Endothelial cell of umbilical vein (primary cell): ENCODE measurements at regions of chr14 and their contacts with region 1.

Region 1: GRCh38 chr14:88551094-88551870 is 3.5 kb downstream of the PTPN21 start:
- DNase-seq: peak; percentile 80
- H3K4me3 ChIP-seq: peak overlapping the region; percentile 77 to 100 (median 79)
- H3K27ac ChIP-seq: peak overlapping the region; percentile 30
- H3K4me1 ChIP-seq: peaks cover 34% of the 10 kb centered on the region
- H3K27me3 ChIP-seq: no peaks in the 10 kb centered on the region
- CTCF ChIP-seq: peak; percentile 9 to 22
- POLR2A ChIP-seq: peak; percentile 51

Region 2: GRCh38 chr14:88385345-88386101 is 165.8 kb before region 1 on chr14 and contains the start of gene SPATA7:
- CTCF ChIA-PET with region 1: interaction called, 3 read pairs
- POLR2A ChIA-PET with region 1: no interaction called
- dilution Hi-C with region 1: no loop called
- intact Hi-C with region 1: loop called (anchors 5 kb)
- DNase-seq: peak; percentile 92
- H3K4me3 ChIP-seq: peak within 1 kb of the TSS; percentile 87 to 94 (median 88)
- H3K27ac ChIP-seq: peak within 1 kb of the TSS; percentile 34
- H3K4me1 ChIP-seq: peaks cover 25% of the 10 kb centered on the region
- H3K27me3 ChIP-seq: peaks cover 11 to 22% of the 10 kb centered on the region in 2 experiments
- CTCF ChIP-seq: no peak
- POLR2A ChIP-seq: peak; percentile 82
- total RNA-seq, gene SPATA7: 8.4 and 9.7 TPM in 2 replicates

Region 3: DNA sequence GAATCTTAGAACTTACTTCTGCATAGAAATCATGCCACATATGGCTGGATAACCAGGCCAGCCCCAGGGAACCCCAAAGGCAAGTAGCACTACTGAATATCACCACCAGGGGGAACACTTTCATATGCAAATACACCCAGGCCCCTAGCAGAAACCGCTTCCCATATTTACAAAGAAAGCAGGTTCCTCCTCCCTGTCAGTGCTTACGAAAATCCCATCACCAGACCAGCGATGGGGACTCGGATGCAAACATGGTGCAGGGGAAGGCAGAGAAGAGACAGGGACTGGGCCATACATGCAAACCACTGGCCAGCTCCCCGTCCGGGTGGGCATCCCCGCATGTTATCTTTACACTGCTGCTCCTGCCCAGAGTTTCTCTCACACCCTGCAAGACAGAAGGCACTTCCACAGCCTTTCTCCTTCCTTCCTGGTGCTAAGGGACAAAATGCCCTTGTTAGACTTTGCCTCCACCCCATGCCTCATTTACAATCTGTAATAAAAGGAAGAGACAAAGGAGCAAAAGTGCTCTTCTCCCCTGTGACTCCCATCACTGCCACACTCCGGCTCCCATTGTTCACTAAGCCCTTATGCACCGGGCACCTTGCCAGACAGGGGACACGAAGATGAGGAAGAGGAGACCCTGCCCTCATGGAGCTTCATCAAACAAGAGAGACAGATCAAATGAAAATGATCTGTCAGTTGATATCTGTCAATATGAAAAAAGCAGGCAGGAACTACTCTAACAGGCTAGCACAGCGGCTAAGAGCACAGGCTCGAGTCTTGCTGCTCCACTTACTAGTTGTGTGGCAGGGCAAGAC is 58.8 kb before region 1 on chr14:
- CTCF ChIA-PET with region 1: interaction called, 5 read pairs
- POLR2A ChIA-PET with region 1: no interaction called
- dilution Hi-C with region 1: no loop called
- intact Hi-C with region 1: loop called (anchors 2 kb)
- DNase-seq: peak; percentile 72
- H3K4me3 ChIP-seq: no peak overlapping the region
- H3K27ac ChIP-seq: no peak overlapping the region
- H3K4me1 ChIP-seq: no peaks in the 10 kb centered on the region
- H3K27me3 ChIP-seq: no peaks in the 10 kb centered on the region
- CTCF ChIP-seq: peak; percentile 72 to 79
- POLR2A ChIP-seq: no peak

Region 4: DNA sequence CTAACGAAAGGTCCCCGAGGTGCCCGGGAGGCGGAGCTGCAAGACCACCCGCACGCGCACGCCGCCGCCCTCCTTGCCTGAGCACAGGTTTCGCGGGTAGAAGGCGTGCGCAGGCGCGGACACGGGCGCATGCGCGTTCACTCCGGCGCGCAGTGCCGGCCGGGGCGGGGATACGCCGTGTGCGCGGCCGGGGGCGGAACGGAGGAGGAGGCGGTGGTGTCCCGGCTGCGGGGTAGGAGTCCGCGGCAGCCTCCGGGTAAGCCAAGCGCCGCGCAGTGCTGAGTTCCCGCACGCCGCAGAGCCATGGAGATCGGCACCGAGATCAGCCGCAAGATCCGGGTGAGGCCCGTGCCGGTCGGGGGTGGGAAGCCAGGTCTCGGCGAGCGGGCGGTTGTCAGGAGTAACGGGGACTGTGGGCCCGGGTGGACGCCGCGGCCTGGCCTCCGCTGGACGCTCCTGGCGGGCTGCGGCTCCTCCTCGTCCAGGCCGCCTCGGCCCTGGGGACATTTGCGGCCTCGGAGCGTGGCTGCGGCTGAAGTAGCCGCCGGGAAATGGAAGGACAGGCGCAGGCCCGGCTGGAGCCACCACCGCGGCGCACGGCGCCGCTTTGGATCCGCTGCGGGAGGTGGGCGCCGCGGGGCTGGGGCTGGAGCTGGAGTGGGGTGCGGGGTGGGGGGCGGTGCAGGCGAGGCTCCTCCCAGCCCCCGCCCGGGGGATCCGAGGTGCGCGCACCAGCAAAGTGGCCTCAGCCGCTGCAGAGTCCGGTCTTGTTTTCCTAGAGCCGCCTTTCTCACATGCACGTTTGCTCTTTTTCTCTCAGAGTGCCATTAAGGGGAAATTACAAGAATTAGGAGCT is 11.8 kb after region 1 on chr14 and contains the start of gene ZC3H14:
- CTCF ChIA-PET with region 1: interaction called, 7 read pairs
- POLR2A ChIA-PET with region 1: no interaction called
- dilution Hi-C with region 1: no loop called
- intact Hi-C with region 1: loop called (anchors 1 kb)
- DNase-seq: peak; percentile 93
- H3K4me3 ChIP-seq: peak within 1 kb of the TSS; percentile 77 to 96 (median 86)
- H3K27ac ChIP-seq: peak within 1 kb of the TSS; percentile 72
- H3K4me1 ChIP-seq: peaks cover 14% of the 10 kb centered on the region
- H3K27me3 ChIP-seq: no peaks in the 10 kb centered on the region
- CTCF ChIP-seq: no peak
- POLR2A ChIP-seq: peak; percentile 83
- total RNA-seq, gene ZC3H14: 59.6 and 61.8 TPM in 2 replicates

Region 5: DNA sequence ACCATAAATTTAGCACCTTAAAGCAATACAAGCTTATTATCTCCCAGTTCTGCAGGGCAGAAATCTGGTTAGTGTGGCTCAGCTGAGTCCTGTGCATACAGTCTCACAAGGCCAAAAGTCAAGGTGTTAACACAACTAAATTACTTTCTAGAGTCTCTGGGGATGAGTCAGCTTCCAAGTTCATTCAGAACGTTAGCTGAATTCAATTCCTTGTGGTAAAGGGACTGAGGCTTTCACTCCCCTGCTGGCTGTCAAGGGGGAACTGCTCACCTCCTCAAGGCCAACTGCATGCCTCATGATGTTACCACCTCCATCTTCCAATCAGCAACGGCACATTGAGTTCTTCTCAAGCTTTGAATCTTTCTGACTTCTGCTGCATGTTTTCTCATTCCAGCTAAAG is 213.8 kb after region 1 on chr14:
- CTCF ChIA-PET with region 1: no interaction called
- POLR2A ChIA-PET with region 1: no interaction called
- dilution Hi-C with region 1: no loop called
- intact Hi-C with region 1: no loop called
- DNase-seq: no peak
- H3K4me3 ChIP-seq: no peak overlapping the region
- H3K27ac ChIP-seq: no peak overlapping the region
- H3K4me1 ChIP-seq: no peaks in the 10 kb centered on the region
- H3K27me3 ChIP-seq: no peaks in the 10 kb centered on the region
- CTCF ChIP-seq: no peak
- POLR2A ChIP-seq: no peak

Region 6: DNA sequence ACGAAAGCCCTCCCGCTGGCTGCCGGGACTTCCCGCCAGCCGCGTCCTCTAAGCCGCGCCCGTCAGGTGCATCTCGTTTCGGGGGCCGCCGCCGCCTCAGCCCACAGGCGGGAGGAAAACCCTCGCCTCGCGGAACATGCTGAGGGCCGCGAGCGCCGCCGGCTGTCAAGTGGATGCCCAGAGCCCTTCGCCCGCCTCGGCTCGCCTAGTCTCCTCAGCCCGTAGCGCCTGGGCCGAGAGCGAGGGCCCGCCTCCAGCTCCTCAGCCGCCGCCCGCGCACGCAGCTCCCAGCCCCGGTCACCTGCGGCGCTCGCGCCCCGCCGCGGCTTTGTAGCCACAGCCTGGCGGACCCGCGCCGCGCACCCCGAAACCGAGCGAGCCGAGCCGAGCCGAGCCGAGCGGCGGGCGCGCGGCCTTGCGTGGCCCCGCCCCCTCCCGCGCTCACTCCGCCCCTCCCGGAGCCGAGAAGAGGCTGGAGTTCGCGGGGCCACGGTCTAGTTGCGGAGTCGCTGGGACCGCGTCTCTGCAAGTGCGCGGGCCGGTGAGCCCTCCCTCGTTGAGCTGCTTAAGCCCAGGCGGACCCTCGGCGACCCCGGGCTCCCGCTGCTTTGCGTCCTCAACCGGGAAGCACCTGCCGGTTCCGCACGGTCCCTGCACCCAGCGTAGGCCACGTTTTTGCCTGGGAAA is 241.4 kb after region 1 on chr14 and contains the start of gene EML5:
- CTCF ChIA-PET with region 1: no interaction called
- POLR2A ChIA-PET with region 1: no interaction called
- dilution Hi-C with region 1: no loop called
- intact Hi-C with region 1: loop called (anchors 10 kb)
- DNase-seq: peak; percentile 76
- H3K4me3 ChIP-seq: peak within 1 kb of the TSS; percentile 7 to 38 (median 35)
- H3K27ac ChIP-seq: no peak within 1 kb of the TSS
- H3K4me1 ChIP-seq: peaks cover 7% of the 10 kb centered on the region
- H3K27me3 ChIP-seq: peaks cover 21 to 34% of the 10 kb centered on the region in 2 experiments
- CTCF ChIP-seq: peak in 1 of 2 donors; percentile 26
- POLR2A ChIP-seq: no peak
- total RNA-seq, gene EML5: 0.09 TPM in 1 of 2 replicates, not detected in the other

Region 7: GRCh38 chr14:88879022-88879421 is 327.7 kb after region 1 on chr14:
- CTCF ChIA-PET with region 1: no interaction called
- POLR2A ChIA-PET with region 1: no interaction called
- dilution Hi-C with region 1: no loop called
- intact Hi-C with region 1: loop called (anchors 5 kb)
- DNase-seq: peak; percentile 92
- H3K4me3 ChIP-seq: peak overlapping the region in 1 of 3 experiments; percentile 16
- H3K27ac ChIP-seq: peak overlapping the region; percentile 82
- H3K4me1 ChIP-seq: peaks cover 12% of the 10 kb centered on the region
- H3K27me3 ChIP-seq: no peaks in the 10 kb centered on the region
- CTCF ChIP-seq: no peak
- POLR2A ChIP-seq: no peak

Region 8: GRCh38 chr14:89027097-89027740 is 475.9 kb after region 1 on chr14:
- CTCF ChIA-PET with region 1: no interaction called
- POLR2A ChIA-PET with region 1: no interaction called
- dilution Hi-C with region 1: no loop called
- intact Hi-C with region 1: loop called (anchors 10 kb)
- DNase-seq: peak; percentile 25
- H3K4me3 ChIP-seq: peak overlapping the region; percentile 40 to 65 (median 56)
- H3K27ac ChIP-seq: no peak overlapping the region
- H3K4me1 ChIP-seq: peaks cover 9% of the 10 kb centered on the region
- H3K27me3 ChIP-seq: peaks cover 25 to 39% of the 10 kb centered on the region in 2 experiments
- CTCF ChIP-seq: peak; percentile 74 to 88
- POLR2A ChIP-seq: no peak